Naive thymus-derived CD4-positive, alpha-beta T cell (primary cell): ENCODE measurements at regions of chr6 and their contacts with region 1.

Region 1: GRCh38 chr6:134123666-134124208 is 71.3 kb upstream of the SLC2A12 start:
- DNase-seq: peak in 7 of 9 donors; percentile 7 to 75 (median 50)
- ATAC-seq: peak; percentile 99
- H3K4me3 ChIP-seq: no peak overlapping the region
- H3K4me3 Mint-ChIP-seq: peak overlapping the region in 4 of 10 donors; percentile 39 to 53 (median 51)
- H3K27ac ChIP-seq: no peak overlapping the region
- H3K27ac Mint-ChIP-seq: peak overlapping the region in 4 of 9 donors; percentile 22 to 70 (median 68)
- H3K4me1 ChIP-seq: no peaks in the 10 kb centered on the region
- H3K4me1 Mint-ChIP-seq: peaks cover 0 to 4% (median 0%) of the 10 kb centered on the region in 7 donors
- H3K27me3 ChIP-seq: no peaks in the 10 kb centered on the region
- H3K27me3 Mint-ChIP-seq: peaks cover 0 to 4% (median 0%) of the 10 kb centered on the region in 5 donors

Region 2: DNA sequence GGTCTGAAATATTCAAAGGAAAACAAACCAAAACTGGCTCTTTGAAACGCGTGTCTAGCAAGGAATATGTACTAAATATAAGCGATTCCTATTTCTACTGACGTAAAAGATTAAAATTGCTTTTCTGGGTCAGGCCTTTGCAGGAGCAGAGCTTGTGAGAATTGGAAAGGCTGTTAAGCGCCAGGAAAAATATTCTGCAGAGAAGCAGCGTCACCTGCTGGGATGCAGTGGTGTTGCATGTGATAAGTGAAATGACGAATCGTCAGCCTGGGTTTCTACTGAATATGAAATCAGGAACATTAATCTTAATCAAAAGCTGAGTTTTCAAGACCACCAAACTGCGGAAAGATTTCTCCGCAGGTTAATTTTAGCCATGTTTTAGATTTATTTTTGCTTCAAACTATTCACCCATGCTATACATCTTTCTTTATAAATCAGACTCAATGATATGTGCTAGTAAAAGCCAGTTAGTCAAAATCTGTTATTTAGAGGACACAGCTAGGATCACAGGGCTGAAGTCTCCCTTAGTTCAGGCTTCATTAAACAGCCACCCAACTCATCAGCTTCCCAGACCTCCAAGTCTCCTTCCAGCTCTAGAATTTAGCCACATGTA is 758.8 kb after region 1 on chr6:
- CTCF ChIA-PET with region 1: interaction called, 5 read pairs
- POLR2A ChIA-PET with region 1: interaction called, 3 read pairs
- intact Hi-C with region 1: loop called in 1 of 2 experiments (anchors 1 kb)
- DNase-seq: peak in 7 of 9 donors; percentile 14 to 57 (median 41)
- ATAC-seq: no peak
- H3K4me3 ChIP-seq: no peak overlapping the region
- H3K4me3 Mint-ChIP-seq: no peak overlapping the region
- H3K27ac ChIP-seq: no peak overlapping the region
- H3K27ac Mint-ChIP-seq: no peak overlapping the region
- H3K4me1 ChIP-seq: no peaks in the 10 kb centered on the region
- H3K4me1 Mint-ChIP-seq: peaks cover 0 to 5% (median 0%) of the 10 kb centered on the region in 7 donors
- H3K27me3 ChIP-seq: no peaks in the 10 kb centered on the region
- H3K27me3 Mint-ChIP-seq: peaks cover 4 to 32% (median 11%) of the 10 kb centered on the region in 5 donors

Region 3: DNA sequence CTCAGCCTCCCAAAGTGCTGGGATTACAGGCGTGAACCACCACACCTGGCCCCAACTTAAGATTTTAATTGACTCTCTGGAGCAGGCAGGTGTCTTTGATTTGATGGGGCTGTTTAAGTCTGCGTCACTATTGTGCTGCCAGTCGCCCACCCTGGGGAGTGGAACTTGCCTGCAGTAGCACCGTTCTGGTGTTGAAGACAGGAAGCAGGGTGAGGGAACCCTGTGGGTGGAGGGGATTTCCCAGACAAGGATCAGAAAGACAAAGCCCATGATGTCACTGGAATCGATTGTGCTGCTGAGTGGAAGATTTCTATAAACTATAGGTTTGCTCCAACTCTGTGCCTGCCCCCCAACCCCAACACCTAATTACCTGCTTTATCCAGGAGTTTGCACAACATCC is 815.2 kb after region 1 on chr6:
- CTCF ChIA-PET with region 1: interaction called, 40 read pairs
- POLR2A ChIA-PET with region 1: no interaction called
- intact Hi-C with region 1: loop called in 1 of 2 experiments (anchors 1 kb)
- DNase-seq: peak in 6 of 9 donors; percentile 27 to 84 (median 34)
- ATAC-seq: peak; percentile 91
- H3K4me3 ChIP-seq: no peak overlapping the region
- H3K4me3 Mint-ChIP-seq: peak overlapping the region in 2 of 10 donors; percentile 25 to 28
- H3K27ac ChIP-seq: no peak overlapping the region
- H3K27ac Mint-ChIP-seq: peak overlapping the region in 3 of 9 donors; percentile 36 to 83 (median 55)
- H3K4me1 ChIP-seq: peaks cover 0 to 6% of the 10 kb centered on the region in 2 donors
- H3K4me1 Mint-ChIP-seq: peaks cover 0 to 15% (median 10%) of the 10 kb centered on the region in 7 donors
- H3K27me3 ChIP-seq: no peaks in the 10 kb centered on the region
- H3K27me3 Mint-ChIP-seq: no peaks in the 10 kb centered on the region